ENCODE measurements at regions of chr2 and their contacts with region 1.

Region 1: GRCh38 chr2:65064728-65065552 is 8.7 kb downstream of the CEP68 start:
- DNase-seq: peak; percentile 19
- H3K4me3 ChIP-seq: peak overlapping the region in 2 of 4 donors; percentile 2 to 40
- H3K27ac ChIP-seq: peak overlapping the region; percentile 64 to 85 (median 80)
- H3K4me1 ChIP-seq: peaks cover 50 to 98% (median 87%) of the 10 kb centered on the region in 3 donors
- H3K27me3 ChIP-seq: no peaks in the 10 kb centered on the region
- CTCF ChIP-seq: peak; percentile 65 to 87 (median 76)
- POLR2A ChIP-seq: no peak

Region 2: GRCh38 chr2:65186872-65187851 is 122.2 kb after region 1 on chr2:
- intact Hi-C with region 1: loop called (anchors 10 kb)
- DNase-seq: no peak
- H3K4me3 ChIP-seq: no peak overlapping the region
- H3K27ac ChIP-seq: no peak overlapping the region
- H3K4me1 ChIP-seq: peaks cover 0 to 3% (median 3%) of the 10 kb centered on the region in 3 donors
- H3K27me3 ChIP-seq: no peaks in the 10 kb centered on the region
- CTCF ChIP-seq: peak; percentile 54 to 82 (median 76)
- POLR2A ChIP-seq: no peak

Region 3: GRCh38 chr2:65666156-65666725 is 601.3 kb after region 1 on chr2:
- intact Hi-C with region 1: no loop called
- DNase-seq: no peak
- H3K4me3 ChIP-seq: no peak overlapping the region
- H3K27ac ChIP-seq: no peak overlapping the region
- H3K4me1 ChIP-seq: peaks cover 0 to 13% (median 0%) of the 10 kb centered on the region in 3 donors
- H3K27me3 ChIP-seq: peaks cover 0 to 3% (median 0%) of the 10 kb centered on the region in 4 donors
- CTCF ChIP-seq: no peak
- POLR2A ChIP-seq: no peak